CD8-positive, alpha-beta T cell (primary cell): ENCODE measurements at regions of chr21 and their contacts with region 1.

Region 1: GRCh38 chr21:24310788-24311187 is 1296.5 kb downstream of the MRPL39 start:
- DNase-seq: no peak
- ATAC-seq: no peak
- H3K4me3 ChIP-seq: no peak overlapping the region
- H3K4me3 Mint-ChIP-seq: no peak overlapping the region
- H3K27ac ChIP-seq: no peak overlapping the region
- H3K27ac Mint-ChIP-seq: no peak overlapping the region
- H3K4me1 ChIP-seq: no peaks in the 10 kb centered on the region
- H3K4me1 Mint-ChIP-seq: no peaks in the 10 kb centered on the region
- H3K27me3 ChIP-seq: no peaks in the 10 kb centered on the region
- H3K27me3 Mint-ChIP-seq: no peaks in the 10 kb centered on the region
- CTCF ChIP-seq: no peak

Region 2: DNA sequence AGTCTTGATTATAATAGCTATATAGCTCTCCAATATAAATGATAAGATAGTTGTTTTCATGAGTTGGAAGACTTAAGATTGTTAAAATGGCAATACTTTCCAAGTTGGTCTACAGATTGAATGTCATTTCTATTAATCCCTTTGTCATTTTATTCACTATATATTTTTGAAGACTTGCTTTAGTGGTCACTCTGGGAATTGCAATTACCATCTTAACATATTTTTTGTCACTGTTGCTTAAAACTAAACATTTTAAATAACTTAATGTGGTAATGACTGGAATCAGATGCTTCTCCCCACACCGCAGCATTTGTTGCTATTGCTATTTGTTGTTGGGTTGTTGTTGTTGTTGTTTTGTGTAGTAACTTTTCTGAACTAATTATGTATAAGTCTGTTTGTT is 296.4 kb before region 1 on chr21:
- CTCF ChIA-PET with region 1: no interaction called
- POLR2A ChIA-PET with region 1: no interaction called
- intact Hi-C with region 1: no loop called
- DNase-seq: no peak
- ATAC-seq: no peak
- H3K4me3 ChIP-seq: no peak overlapping the region
- H3K4me3 Mint-ChIP-seq: no peak overlapping the region
- H3K27ac ChIP-seq: no peak overlapping the region
- H3K27ac Mint-ChIP-seq: no peak overlapping the region
- H3K4me1 ChIP-seq: no peaks in the 10 kb centered on the region
- H3K4me1 Mint-ChIP-seq: no peaks in the 10 kb centered on the region
- H3K27me3 ChIP-seq: no peaks in the 10 kb centered on the region
- H3K27me3 Mint-ChIP-seq: no peaks in the 10 kb centered on the region
- CTCF ChIP-seq: no peak

Region 3: GRCh38 chr21:24076179-24076578 is 234.6 kb before region 1 on chr21:
- CTCF ChIA-PET with region 1: no interaction called
- POLR2A ChIA-PET with region 1: no interaction called
- intact Hi-C with region 1: no loop called
- DNase-seq: peak in 2 of 9 experiments; percentile 7 to 37
- ATAC-seq: no peak
- H3K4me3 ChIP-seq: no peak overlapping the region
- H3K4me3 Mint-ChIP-seq: no peak overlapping the region
- H3K27ac ChIP-seq: no peak overlapping the region
- H3K27ac Mint-ChIP-seq: no peak overlapping the region
- H3K4me1 ChIP-seq: no peaks in the 10 kb centered on the region
- H3K4me1 Mint-ChIP-seq: no peaks in the 10 kb centered on the region
- H3K27me3 ChIP-seq: no peaks in the 10 kb centered on the region
- H3K27me3 Mint-ChIP-seq: no peaks in the 10 kb centered on the region
- CTCF ChIP-seq: no peak

Region 4: DNA sequence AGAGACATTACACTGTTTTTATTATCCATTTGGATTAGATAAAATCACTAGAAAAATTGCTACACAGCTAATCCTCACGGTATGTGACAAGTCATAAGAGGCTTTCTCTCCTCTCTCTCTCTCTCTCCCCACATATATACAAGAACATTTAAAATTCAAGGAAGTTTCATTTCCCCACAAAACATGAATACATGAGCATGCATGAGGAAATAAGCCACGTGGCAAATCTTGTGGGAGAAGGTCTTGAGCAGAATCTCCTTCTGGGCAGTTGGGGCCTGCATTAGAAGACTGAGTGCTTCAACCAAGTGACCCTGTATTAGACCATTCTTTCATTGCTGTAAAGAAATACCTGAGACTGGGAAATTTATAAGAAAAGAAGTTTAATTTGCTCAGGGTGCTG is 16.6 kb before region 1 on chr21:
- CTCF ChIA-PET with region 1: no interaction called
- POLR2A ChIA-PET with region 1: no interaction called
- intact Hi-C with region 1: loop called in 1 of 2 experiments (anchors 1 kb)
- DNase-seq: no peak
- ATAC-seq: no peak
- H3K4me3 ChIP-seq: no peak overlapping the region
- H3K4me3 Mint-ChIP-seq: no peak overlapping the region
- H3K27ac ChIP-seq: no peak overlapping the region
- H3K27ac Mint-ChIP-seq: no peak overlapping the region
- H3K4me1 ChIP-seq: peaks cover 9% of the 10 kb centered on the region
- H3K4me1 Mint-ChIP-seq: peaks cover 9% of the 10 kb centered on the region
- H3K27me3 ChIP-seq: no peaks in the 10 kb centered on the region
- H3K27me3 Mint-ChIP-seq: no peaks in the 10 kb centered on the region
- CTCF ChIP-seq: no peak